Activated CD4-positive, alpha-beta memory T cell treated with anti-CD3 and anti-CD28 coated beads, Interleukin-2, amount 10 ng/mL, durations not matched to agents 7 days and 5 days (primary cell): ENCODE measurements at regions of chr15 and their contacts with region 1.

Region 1: DNA sequence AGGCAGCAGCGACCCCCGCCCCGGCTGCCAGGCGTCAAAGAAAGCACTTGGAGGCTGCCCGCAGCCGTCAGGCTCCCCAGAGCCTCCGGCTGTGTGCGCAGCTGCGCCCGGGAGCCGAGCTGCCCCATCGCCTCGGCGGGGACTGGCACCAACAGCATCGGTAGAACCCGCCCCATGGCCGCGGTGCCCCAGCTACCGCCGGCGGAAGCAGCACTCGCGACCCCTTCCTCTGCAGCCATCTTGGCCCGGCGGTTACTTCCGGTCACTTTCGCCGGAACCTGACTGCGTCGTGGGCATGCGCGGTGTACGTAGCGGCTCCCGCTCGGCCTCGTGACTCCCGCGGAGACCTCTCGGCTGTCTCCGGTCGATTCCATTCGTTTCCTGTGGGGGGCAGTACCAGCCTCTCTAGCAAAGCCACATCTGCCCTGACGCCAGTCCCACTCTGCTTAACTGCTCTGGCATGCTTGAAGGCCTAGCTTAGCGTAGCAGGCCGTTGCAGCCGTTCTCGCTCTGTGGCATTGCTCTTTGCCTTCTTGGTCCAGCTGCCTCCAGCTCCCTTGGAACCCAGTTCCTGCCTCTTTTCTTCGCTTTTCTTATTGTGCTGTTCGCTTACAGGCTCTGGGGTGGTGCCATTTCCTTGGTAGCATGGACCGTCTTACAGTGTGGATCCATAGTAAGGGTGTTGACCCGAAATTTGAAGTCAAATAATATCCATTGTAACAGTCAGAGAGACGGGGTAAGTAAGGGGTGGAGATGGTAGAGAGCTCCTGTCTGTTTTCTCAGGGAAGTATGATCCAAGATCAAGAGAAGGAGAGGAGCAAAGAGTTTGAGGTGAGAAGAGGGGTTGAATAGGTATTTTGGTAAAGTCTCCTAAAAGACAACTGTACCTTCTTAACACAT is at the start of gene SPG11:
- DNase-seq: peak; percentile 98
- H3K4me3 Mint-ChIP-seq: peak within 1 kb of the TSS; percentile 97
- H3K27ac Mint-ChIP-seq: peak within 1 kb of the TSS; percentile 92
- H3K4me1 Mint-ChIP-seq: peaks cover 63% of the 10 kb centered on the region
- H3K27me3 Mint-ChIP-seq: no peaks in the 10 kb centered on the region
- total RNA-seq, gene SPG11: 76.9 to 84.4 TPM

Region 2: DNA sequence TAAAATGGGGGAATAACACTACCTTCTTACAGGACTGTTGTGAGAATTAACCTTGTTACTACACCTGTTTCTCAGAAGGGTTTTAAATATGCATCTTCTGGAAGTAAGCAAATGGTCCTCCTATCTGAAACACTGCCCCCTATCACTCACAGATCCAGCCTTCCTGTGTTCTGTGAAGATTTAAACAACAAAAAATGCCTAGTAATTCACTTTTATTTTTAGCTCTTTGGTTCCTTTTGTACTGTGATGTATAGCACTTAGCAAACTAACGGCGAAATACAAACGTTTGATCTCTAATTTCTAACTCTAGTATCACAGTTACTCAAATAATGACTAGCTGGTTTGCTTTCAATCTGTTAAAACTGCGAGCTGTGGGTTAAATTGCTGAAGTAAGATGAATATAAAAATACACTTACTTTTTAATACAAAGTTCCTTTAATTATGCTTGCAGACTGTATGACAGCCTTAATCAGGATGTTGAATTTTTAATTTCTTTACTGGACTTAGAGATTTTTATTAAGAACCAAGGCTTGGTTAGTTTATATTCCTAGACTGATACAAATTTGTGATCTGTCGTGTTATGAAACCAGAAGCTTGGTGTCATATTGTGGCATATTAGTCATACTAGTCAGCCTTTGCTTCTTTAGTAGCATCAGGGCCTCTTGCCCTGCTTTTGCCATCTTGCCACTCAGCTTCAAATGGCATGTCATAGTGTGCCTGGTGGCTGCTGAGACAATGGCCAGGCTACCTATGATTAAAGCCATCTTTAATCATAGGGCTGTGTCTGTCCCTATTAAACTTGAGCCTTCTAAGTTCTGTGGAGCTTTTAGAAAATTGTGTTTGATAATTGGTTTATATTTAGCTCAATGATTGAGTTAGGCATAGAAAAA is 117.5 kb before region 1 on chr15:
- CTCF ChIA-PET with region 1: interaction called, 12 read pairs
- POLR2A ChIA-PET with region 1: interaction called, 9 read pairs
- DNase-seq: peak; percentile 64
- H3K4me3 Mint-ChIP-seq: peak overlapping the region; percentile 72
- H3K27ac Mint-ChIP-seq: peak overlapping the region; percentile 97
- H3K4me1 Mint-ChIP-seq: peaks cover 55% of the 10 kb centered on the region
- H3K27me3 Mint-ChIP-seq: no peaks in the 10 kb centered on the region

Region 3: GRCh38 chr15:44584162-44584749 is 79.4 kb before region 1 on chr15:
- CTCF ChIA-PET with region 1: interaction called, 26 read pairs
- POLR2A ChIA-PET with region 1: interaction called, 4 read pairs
- DNase-seq: peak; percentile 70
- H3K4me3 Mint-ChIP-seq: no peak overlapping the region
- H3K27ac Mint-ChIP-seq: no peak overlapping the region
- H3K4me1 Mint-ChIP-seq: peaks cover 14% of the 10 kb centered on the region
- H3K27me3 Mint-ChIP-seq: no peaks in the 10 kb centered on the region

Region 4: DNA sequence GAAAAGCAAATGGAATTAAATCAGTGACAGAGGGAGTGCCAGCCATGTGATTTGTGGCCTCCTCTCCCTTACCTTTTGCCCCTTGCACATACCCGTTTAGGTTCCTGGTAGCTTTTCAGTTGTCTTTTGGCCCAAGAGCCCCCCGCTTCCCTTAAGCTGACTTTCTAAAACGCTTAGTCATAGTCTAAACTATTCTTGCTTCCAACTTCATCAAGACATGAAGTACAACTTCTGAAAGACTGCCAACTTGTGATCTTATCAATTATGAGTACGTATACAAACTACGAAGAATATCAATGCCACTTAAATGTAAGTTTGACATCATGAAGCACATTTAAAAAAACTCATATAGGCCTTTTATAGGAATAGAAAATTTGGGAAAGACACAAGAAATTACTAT is 64.8 kb before region 1 on chr15:
- CTCF ChIA-PET with region 1: interaction called, 20 read pairs
- POLR2A ChIA-PET with region 1: interaction called, 47 read pairs
- DNase-seq: no peak
- H3K4me3 Mint-ChIP-seq: no peak overlapping the region
- H3K27ac Mint-ChIP-seq: peak overlapping the region; percentile 77
- H3K4me1 Mint-ChIP-seq: peaks cover 38% of the 10 kb centered on the region
- H3K27me3 Mint-ChIP-seq: no peaks in the 10 kb centered on the region

Region 5: DNA sequence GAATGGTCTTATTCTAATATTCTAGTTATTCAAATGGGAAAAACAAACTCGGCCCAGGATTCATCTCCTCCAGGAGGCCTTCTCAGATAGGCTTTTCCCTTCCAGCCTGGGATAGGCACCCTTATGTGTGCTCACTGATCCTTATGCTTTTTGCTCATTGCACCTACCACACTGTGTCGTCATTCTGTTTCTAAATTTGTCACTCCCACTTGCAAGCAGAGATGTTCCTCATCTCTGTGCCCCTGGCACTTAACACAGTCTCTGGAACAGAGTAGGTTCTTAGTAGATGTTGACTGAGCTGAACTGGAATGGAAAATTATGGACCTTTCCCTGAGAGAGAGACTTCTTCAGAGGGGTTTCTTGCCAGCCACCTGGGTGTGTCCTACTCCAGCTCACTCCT is 18.6 kb after region 1 on chr15:
- CTCF ChIA-PET with region 1: interaction called, 85 read pairs
- POLR2A ChIA-PET with region 1: interaction called, 232 read pairs
- DNase-seq: no peak
- H3K4me3 Mint-ChIP-seq: peak overlapping the region; percentile 64
- H3K27ac Mint-ChIP-seq: peak overlapping the region; percentile 89
- H3K4me1 Mint-ChIP-seq: peaks cover 87% of the 10 kb centered on the region
- H3K27me3 Mint-ChIP-seq: no peaks in the 10 kb centered on the region

Region 6: DNA sequence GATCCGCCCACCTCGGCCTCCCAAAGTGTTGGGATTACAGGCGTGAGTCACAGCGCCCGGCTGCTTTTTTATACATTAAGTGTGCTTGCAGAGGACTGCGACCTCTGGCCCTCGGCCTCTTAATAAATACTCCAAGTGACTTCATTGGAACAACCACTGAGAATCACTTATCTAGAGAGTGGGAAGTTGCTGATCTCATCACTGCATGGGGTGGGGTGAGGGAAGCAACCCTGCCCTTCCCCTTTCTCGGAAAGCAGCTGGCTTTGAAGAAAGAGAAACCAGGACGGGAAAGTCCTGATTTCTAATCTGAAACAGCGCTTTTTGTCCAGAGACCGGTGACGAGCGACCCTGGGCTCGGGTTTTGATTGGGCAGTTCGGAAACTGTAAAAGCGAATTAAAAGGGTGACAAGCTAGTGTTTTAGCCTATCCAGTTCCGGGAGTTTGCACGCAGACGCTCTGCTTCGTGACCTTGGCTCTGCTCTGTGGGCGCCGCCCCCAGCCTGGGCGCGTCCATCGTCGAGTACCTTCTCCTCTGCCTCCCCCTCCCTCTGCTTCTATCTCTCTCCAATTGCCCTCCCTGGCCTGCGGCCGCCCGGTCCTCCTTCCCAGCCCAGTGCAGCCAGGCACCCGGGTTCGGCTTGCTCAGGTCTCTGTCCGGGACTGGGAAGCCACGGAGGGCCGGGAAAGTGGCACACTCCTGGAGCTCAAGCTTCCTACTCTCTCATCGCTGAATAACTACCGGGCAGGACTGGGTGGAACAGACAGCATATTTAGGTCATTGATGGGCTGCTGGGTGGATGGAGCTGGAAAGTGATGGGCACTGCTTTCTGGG is 65.1 kb after region 1 on chr15:
- CTCF ChIA-PET with region 1: interaction called, 308 read pairs
- POLR2A ChIA-PET with region 1: interaction called, 4,153 read pairs
- DNase-seq: peak; percentile 97
- H3K4me3 Mint-ChIP-seq: peak overlapping the region; percentile 99
- H3K27ac Mint-ChIP-seq: peak overlapping the region; percentile 100
- H3K4me1 Mint-ChIP-seq: peaks cover 69% of the 10 kb centered on the region
- H3K27me3 Mint-ChIP-seq: no peaks in the 10 kb centered on the region